CD8-positive, alpha-beta T cell (primary cell): ENCODE measurements at regions of chr5 and their contacts with region 1.

Region 1: DNA sequence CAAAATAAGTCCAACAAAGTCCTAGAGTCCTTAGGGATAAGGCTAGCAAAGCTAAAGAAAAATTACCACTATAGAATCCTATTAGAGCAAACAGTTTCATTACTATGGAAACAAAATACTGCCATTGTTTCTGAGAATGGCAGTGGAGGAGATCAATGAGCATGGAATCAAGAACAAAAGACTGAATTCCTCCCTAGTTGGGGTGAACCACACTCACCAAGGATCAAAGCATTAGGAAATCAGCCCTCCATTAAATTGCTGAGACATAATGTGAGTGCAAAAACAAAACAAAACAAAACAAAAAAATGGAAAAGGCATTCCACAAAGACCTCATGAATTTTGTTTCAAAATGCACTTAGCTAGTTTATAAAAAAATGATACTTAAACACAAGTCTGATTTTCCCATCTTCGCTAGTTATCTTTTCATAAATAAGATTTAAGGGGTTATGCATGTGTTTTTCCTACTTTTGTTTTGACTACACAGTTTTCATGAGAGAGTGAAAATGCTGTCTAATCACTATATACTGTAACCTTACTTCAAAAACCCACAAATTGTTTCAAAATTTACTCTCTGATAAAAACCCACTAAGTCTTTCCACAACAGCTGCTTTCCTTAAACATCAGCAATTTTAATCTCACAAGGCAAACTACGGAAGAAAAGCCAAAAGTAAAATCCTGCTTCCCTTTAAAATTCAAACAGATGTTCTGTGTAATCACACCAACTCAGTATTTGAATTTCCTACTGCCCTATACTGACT is 9.7 kb downstream of the SERINC5 start:
- DNase-seq: peak in 1 of 9 experiments; percentile 32
- ATAC-seq: no peak
- H3K4me3 ChIP-seq: no peak overlapping the region
- H3K4me3 Mint-ChIP-seq: peak overlapping the region; percentile 19
- H3K27ac ChIP-seq: no peak overlapping the region
- H3K27ac Mint-ChIP-seq: peak overlapping the region; percentile 70
- H3K4me1 ChIP-seq: peaks cover 61% of the 10 kb centered on the region
- H3K4me1 Mint-ChIP-seq: peaks cover 68% of the 10 kb centered on the region
- H3K27me3 ChIP-seq: no peaks in the 10 kb centered on the region
- H3K27me3 Mint-ChIP-seq: no peaks in the 10 kb centered on the region
- CTCF ChIP-seq: no peak

Region 2: GRCh38 chr5:80229902-80230255 is 16.3 kb before region 1 on chr5:
- CTCF ChIA-PET with region 1: interaction called, 5 read pairs
- POLR2A ChIA-PET with region 1: interaction called, 5 read pairs
- intact Hi-C with region 1: loop called in 1 of 2 experiments (anchors 2 kb)
- DNase-seq: no peak
- ATAC-seq: no peak
- H3K4me3 ChIP-seq: no peak overlapping the region
- H3K4me3 Mint-ChIP-seq: peak overlapping the region; percentile 18
- H3K27ac ChIP-seq: no peak overlapping the region
- H3K27ac Mint-ChIP-seq: peak overlapping the region; percentile 73
- H3K4me1 ChIP-seq: peaks cover 77% of the 10 kb centered on the region
- H3K4me1 Mint-ChIP-seq: peaks cover 79% of the 10 kb centered on the region
- H3K27me3 ChIP-seq: no peaks in the 10 kb centered on the region
- H3K27me3 Mint-ChIP-seq: no peaks in the 10 kb centered on the region
- CTCF ChIP-seq: no peak

Region 3: GRCh38 chr5:81165493-81166119 is 919.4 kb after region 1 on chr5:
- CTCF ChIA-PET with region 1: no interaction called
- POLR2A ChIA-PET with region 1: no interaction called
- intact Hi-C with region 1: no loop called
- DNase-seq: peak; percentile 20 to 73 (median 52)
- ATAC-seq: peak; percentile 71
- H3K4me3 ChIP-seq: no peak overlapping the region
- H3K4me3 Mint-ChIP-seq: no peak overlapping the region
- H3K27ac ChIP-seq: no peak overlapping the region
- H3K27ac Mint-ChIP-seq: peak overlapping the region; percentile 45
- H3K4me1 ChIP-seq: no peaks in the 10 kb centered on the region
- H3K4me1 Mint-ChIP-seq: peaks cover 2% of the 10 kb centered on the region
- H3K27me3 ChIP-seq: no peaks in the 10 kb centered on the region
- H3K27me3 Mint-ChIP-seq: no peaks in the 10 kb centered on the region
- CTCF ChIP-seq: peak; percentile 52